ENCODE measurements at regions of chr7 and their contacts with region 1.

Region 1: GRCh38 chr7:27204851-27205337 is 5.0 kb upstream of the HOXA13 start:
- DNase-seq: peak in 1 of 4 donors; percentile 82
- ATAC-seq: peak; percentile 10
- H3K4me3 ChIP-seq: no peak overlapping the region
- H3K27ac ChIP-seq: no peak overlapping the region
- H3K4me1 ChIP-seq: peaks cover 0 to 39% of the 10 kb centered on the region in 2 donors
- H3K27me3 ChIP-seq: peaks cover 93 to 99% of the 10 kb centered on the region in 2 donors
- CTCF ChIP-seq: no peak

Region 2: DNA sequence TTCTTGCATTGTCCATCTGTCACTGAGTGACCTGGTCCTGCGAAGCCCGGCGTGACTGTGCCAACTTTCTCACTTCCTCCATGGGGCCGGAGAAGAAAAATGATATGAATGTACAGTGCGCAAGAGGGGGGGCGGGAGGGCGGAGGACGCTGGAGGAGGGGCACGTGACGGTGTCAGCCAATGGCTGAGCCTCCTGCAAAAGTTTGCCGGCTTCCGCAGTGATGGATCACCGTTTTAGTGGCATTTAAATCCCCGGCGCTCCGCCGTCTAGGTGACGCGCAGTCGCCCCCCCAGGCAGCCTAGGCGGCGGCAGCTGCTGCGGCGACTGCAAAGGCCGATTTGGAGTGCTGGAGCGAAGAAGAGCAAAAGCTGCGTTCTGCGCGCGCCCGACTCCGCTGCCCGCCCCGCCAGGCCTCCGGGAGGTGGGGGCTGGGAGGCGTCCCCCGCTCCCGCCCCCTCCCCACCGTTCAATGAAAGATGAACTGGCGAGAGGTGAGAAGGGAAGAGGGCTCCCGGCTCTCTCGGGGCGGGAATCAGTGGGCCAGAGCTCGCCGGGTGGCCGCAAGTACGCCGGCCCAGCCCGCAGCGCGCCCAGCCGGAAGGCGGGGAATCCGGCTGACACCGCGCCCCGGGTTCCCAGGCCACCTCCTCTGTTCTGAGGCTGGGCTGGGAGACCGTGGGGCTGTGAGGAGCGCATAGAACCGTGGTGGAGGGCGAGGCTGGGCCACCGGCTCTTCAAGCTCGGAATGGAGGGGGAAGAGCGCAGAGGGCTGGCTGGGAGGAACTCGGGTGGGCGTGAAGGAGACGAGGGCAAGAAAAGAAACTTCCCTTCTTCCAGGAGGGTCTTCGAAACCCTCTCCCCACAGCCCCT is 108.8 kb before region 1 on chr7 and contains the start of gene HOXA1:
- intact Hi-C with region 1: no loop called
- DNase-seq: peak; percentile 86 to 95 (median 88)
- ATAC-seq: peak; percentile 81
- H3K4me3 ChIP-seq: peak within 1 kb of the TSS; percentile 59 to 88
- H3K27ac ChIP-seq: peak within 1 kb of the TSS; percentile 88 to 90
- H3K4me1 ChIP-seq: peaks cover 4 to 37% of the 10 kb centered on the region in 2 donors
- H3K27me3 ChIP-seq: peaks cover 13 to 100% of the 10 kb centered on the region in 2 donors
- CTCF ChIP-seq: no peak
- polyA plus RNA-seq, gene HOXA1: 1.9 to 3.1 (median 2.3) TPM

Region 3: DNA sequence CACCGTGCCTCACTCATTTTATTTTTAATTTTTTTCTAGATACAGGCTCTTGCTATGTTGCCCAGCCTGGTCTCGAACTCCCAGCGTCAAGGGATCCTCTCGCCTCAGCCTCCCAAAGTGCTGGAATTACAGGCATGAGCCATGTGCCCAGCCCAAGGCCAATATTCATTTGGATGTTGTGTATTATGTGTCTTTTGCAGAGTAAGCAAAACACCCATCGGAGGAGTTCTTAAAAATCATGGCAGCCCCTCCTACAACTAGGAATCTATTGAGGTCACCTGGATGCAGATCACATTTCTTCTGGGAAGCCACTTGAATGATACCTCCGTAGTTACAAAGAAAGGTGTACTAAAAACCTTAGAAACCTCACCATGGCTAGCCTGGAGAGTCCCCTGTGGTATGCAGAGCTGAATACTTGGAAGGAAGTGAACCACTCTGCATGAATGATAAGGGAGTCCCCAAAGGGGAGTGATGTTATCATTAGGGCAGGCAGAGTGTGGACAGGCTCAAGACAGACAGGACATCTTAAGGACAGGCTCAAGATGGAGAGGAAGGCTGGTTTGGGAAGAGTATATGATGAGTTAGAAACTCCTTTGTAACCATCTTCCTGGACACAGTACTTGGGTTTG is 720.8 kb after region 1 on chr7:
- intact Hi-C with region 1: loop called in 1 of 2 experiments (anchors 5 kb)
- DNase-seq: no peak
- ATAC-seq: no peak
- H3K4me3 ChIP-seq: no peak overlapping the region
- H3K27ac ChIP-seq: no peak overlapping the region
- H3K4me1 ChIP-seq: peaks cover 0 to 4% of the 10 kb centered on the region in 2 donors
- H3K27me3 ChIP-seq: no peaks in the 10 kb centered on the region
- CTCF ChIP-seq: no peak

Measured in left lung (tissue), 14 donors.